Ascending aorta (tissue), 2 donors: ENCODE measurements at regions of chr7 and their contacts with region 1.

Region 1: DNA sequence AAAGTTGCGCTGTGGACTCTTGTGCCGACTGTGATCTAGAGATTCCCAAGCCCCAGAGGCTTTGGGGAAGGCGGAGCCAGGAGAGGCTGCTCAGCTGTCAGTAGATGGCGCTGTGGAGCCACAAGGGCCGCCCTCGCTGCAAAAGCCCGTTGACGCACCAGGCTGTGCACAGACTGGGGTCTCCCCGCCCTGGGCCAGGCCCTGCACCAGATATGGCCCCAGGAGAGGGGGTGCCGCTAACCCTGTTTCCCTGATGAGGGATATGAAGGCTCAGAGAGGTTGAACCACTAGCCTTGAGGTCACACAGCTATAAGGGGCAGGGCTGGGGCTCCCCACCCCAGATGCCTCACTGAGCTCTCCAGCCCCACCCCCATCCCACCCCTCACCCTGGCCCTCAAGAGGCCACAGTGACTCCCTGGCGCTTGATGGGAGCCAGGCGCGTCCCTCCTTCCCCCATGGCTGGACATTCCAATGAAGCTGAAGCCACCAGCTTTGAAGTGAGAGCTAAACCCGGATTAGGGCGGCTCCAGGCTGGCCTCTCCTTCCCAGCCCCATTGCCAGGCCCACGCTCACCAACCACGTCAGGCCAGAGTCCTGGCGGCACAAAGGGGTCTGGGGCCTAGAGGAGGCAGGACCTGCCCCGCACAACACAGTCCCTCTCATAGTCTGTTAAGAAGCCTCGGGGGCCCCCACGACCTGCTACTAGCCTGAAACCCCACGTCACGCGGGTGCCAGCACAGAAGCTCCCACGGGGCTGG is 26.4 kb downstream of the MYL10 start:
- DNase-seq: peak in 1 of 2 donors; percentile 82
- H3K4me3 ChIP-seq: peak overlapping the region in 1 of 2 donors; percentile 10
- H3K27ac ChIP-seq: no peak overlapping the region
- H3K4me1 ChIP-seq: peaks cover 0 to 6% of the 10 kb centered on the region in 2 donors
- H3K27me3 ChIP-seq: no peaks in the 10 kb centered on the region
- CTCF ChIP-seq: peak; percentile 86 to 89 (median 88)

Region 2: DNA sequence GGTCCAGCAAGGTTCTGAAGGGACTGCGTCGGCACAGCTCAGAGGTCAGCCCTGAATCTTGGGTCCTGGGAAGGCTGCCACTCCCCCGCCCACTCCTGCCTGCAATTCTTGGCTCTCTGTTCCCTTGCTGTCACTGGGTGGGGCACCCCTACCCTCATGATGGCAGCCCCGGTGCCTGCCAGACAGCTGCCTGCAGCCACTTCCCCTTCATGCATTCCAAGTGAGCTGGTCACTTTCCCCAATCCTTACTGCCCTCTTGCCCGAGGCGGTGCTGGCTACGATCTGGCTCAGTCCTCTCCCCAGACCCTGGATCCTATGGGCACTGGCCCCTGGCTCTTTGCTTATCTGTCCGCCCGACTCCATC is 12.3 kb after region 1 on chr7:
- intact Hi-C with region 1: no loop called
- DNase-seq: peak; percentile 51 to 87
- H3K4me3 ChIP-seq: no peak overlapping the region
- H3K27ac ChIP-seq: peak overlapping the region; percentile 75 to 96
- H3K4me1 ChIP-seq: peaks cover 11 to 21% of the 10 kb centered on the region in 2 donors
- H3K27me3 ChIP-seq: no peaks in the 10 kb centered on the region
- CTCF ChIP-seq: no peak

Region 3: GRCh38 chr7:102125127-102125561 is 522.5 kb after region 1 on chr7:
- intact Hi-C with region 1: loop called (anchors 10 kb)
- DNase-seq: peak; percentile 68 to 92
- H3K4me3 ChIP-seq: no peak overlapping the region
- H3K27ac ChIP-seq: peak overlapping the region; percentile 70 to 74
- H3K4me1 ChIP-seq: peaks cover 0 to 14% of the 10 kb centered on the region in 2 donors
- H3K27me3 ChIP-seq: no peaks in the 10 kb centered on the region
- CTCF ChIP-seq: peak in 2 of 3 experiments; percentile 23 to 40

Region 4: GRCh38 chr7:102236592-102237287 is 634.1 kb after region 1 on chr7:
- intact Hi-C with region 1: loop called (anchors 2 kb)
- DNase-seq: peak in 1 of 2 donors; percentile 77
- H3K4me3 ChIP-seq: no peak overlapping the region
- H3K27ac ChIP-seq: no peak overlapping the region
- H3K4me1 ChIP-seq: no peaks in the 10 kb centered on the region
- H3K27me3 ChIP-seq: no peaks in the 10 kb centered on the region
- CTCF ChIP-seq: peak; percentile 65 to 83 (median 68)

Region 5: DNA sequence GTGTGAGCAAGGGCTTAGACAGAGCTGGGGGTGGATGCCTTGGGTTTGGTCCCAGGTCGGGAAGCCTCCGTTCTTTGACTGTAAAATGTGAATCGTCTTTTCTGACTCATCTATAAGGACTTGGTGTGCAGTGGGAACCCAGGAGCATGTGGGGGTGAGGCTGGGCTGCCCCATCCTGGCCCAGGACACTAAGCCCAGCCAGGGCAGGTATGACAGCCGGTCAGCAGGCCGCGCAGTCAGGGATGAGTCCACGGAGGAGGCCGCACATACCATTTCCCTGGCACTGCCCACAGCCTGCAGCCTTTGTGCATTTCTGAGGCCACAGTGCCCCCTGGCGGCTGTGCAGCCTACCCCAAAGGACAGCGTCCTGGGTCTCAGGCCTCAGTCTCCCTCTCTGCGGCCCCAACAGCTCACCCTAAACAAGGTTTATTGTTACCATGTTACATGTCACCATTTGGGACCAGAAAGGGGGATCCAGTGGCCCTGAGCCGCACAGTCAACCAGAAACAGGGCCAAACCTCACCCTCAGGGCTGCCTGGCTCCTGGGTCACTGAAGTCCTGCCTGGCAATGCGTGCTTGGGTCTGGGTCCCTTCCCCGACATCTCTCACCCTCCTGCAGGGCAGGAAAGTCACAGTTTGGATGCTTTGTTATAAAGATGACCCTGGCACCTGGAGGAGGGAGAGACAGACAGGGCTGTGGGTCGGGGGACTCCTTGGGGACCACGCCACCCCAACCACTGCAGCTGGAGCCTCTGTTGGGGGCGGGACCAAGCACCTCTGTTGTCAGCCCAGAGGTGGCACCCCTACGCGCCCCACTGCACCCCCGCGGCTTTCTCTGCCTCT is 669.6 kb after region 1 on chr7:
- intact Hi-C with region 1: loop called (anchors 5 kb)
- DNase-seq: peak in 1 of 2 donors; percentile 83
- H3K4me3 ChIP-seq: no peak overlapping the region
- H3K27ac ChIP-seq: no peak overlapping the region
- H3K4me1 ChIP-seq: no peaks in the 10 kb centered on the region
- H3K27me3 ChIP-seq: no peaks in the 10 kb centered on the region
- CTCF ChIP-seq: peak; percentile 85 to 93 (median 85)